ENCODE measurements at regions of chr5 and their contacts with region 1.

Region 1: GRCh38 chr5:132813599-132814502 is 749 bp downstream of the SOWAHA start:
- DNase-seq: peak; percentile 68
- ATAC-seq: peak; percentile 83
- H3K4me3 Mint-ChIP-seq: peak overlapping the region; percentile 37; the same call in 1 of the 2 replicates
- H3K27ac Mint-ChIP-seq: no peak overlapping the region
- H3K4me1 Mint-ChIP-seq: peaks cover 9% of the 10 kb centered on the region
- H3K27me3 Mint-ChIP-seq: peaks cover 77% of the 10 kb centered on the region
- CTCF ChIP-seq: no peak

Region 2: GRCh38 chr5:132746954-132747615 is 66.8 kb before region 1 on chr5 and contains the start of gene CCNI2:
- CTCF ChIA-PET with region 1: interaction called, 50 read pairs
- POLR2A ChIA-PET with region 1: interaction called, 3 read pairs
- DNase-seq: peak; percentile 73
- ATAC-seq: peak; percentile 81
- H3K4me3 Mint-ChIP-seq: peak within 1 kb of the TSS; percentile 59
- H3K27ac Mint-ChIP-seq: no peak within 1 kb of the TSS
- H3K4me1 Mint-ChIP-seq: peaks cover 4% of the 10 kb centered on the region; the same call in 1 of the 2 replicates
- H3K27me3 Mint-ChIP-seq: peaks cover 66% of the 10 kb centered on the region
- CTCF ChIP-seq: no peak
- total RNA-seq, gene CCNI2: 1.1 to 1.7 TPM (median 1.6 TPM) in 3 replicates

Region 3: GRCh38 chr5:132753135-132753987 is 60.5 kb before region 1 on chr5:
- CTCF ChIA-PET with region 1: interaction called, 92 read pairs
- POLR2A ChIA-PET with region 1: interaction called, 3 read pairs
- DNase-seq: peak; percentile 40
- ATAC-seq: peak; percentile 91
- H3K4me3 Mint-ChIP-seq: no peak overlapping the region
- H3K27ac Mint-ChIP-seq: peak overlapping the region; percentile 28; the same call in 1 of the 2 replicates
- H3K4me1 Mint-ChIP-seq: peaks cover 17% of the 10 kb centered on the region
- H3K27me3 Mint-ChIP-seq: peaks cover 25% of the 10 kb centered on the region
- CTCF ChIP-seq: no peak

Measured in WTC11 (cell line).